ENCODE measurements at regions of chr2 and their contacts with region 1.

Region 1: GRCh38 chr2:198273660-198274059 is 469.3 kb downstream of the PLCL1 start:
- DNase-seq: peak; percentile 6
- H3K4me3 ChIP-seq: no peak overlapping the region
- CTCF ChIP-seq: no peak

Region 2: DNA sequence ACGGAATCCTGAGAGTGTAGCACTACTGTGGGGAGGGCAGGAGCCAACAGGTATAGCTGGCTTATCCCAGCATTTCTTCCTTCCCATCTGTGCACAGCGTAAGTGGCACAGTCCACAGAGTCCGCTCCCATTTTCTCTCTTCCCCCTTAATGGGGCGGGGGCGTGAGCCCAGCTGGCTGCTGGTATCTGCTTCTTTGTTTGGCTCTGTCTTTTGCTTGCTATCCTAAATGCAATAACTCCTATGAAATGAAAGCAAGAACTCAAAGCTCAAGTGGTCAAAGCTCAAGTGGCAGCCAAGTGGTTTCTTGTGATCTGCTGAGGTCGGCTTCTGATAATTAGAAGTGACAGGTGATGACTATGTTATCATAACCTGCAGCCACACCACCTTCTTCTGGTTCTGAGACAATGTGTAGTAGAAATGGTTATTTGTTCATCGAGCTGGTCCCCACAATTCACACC is 276.5 kb before region 1 on chr2:
- in situ Hi-C with region 1: loop called (anchors 5 kb)
- DNase-seq: no peak
- H3K4me3 ChIP-seq: no peak overlapping the region
- CTCF ChIP-seq: no peak

Region 3: GRCh38 chr2:198214114-198214596 is 59.5 kb before region 1 on chr2:
- in situ Hi-C with region 1: loop called (anchors 10 kb)
- DNase-seq: no peak
- H3K4me3 ChIP-seq: no peak overlapping the region
- CTCF ChIP-seq: no peak

Region 4: DNA sequence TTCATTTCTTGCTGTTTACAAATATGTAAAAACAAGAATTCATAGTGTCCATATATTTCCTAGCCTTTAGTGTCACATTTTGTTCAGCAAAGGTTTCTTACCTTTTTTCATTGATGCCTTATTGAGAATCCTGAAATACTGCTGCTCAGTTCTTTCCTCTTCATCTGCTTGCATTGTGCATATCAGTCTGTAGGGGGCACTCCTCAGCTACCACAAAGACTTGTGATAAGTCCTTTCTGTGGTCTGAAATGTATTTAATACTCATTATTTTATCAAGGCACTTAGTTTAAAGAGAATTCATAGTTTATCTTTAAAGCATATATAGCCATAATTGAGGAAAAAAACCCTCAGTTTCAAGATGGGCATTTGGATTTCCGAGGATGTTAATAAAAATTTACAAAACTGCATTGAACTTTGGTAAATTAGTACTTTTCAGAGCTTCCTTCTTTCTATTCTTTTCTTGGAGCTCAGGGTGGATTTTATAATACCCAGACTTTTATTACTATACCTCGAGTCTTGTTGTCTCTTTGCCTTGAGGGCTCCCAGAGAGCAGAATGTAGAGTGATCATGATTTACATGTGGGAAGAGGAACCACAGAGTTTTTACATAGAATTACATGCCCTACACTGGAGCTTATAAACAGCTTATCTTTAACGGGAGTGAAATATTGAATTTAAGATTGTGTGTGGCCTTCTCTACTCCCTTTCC is 100.9 kb after region 1 on chr2:
- in situ Hi-C with region 1: no loop called
- DNase-seq: peak; percentile 74
- H3K4me3 ChIP-seq: no peak overlapping the region
- CTCF ChIP-seq: peak; percentile 84